ENCODE measurements at regions of chr10 and their contacts with region 1.

Region 1: DNA sequence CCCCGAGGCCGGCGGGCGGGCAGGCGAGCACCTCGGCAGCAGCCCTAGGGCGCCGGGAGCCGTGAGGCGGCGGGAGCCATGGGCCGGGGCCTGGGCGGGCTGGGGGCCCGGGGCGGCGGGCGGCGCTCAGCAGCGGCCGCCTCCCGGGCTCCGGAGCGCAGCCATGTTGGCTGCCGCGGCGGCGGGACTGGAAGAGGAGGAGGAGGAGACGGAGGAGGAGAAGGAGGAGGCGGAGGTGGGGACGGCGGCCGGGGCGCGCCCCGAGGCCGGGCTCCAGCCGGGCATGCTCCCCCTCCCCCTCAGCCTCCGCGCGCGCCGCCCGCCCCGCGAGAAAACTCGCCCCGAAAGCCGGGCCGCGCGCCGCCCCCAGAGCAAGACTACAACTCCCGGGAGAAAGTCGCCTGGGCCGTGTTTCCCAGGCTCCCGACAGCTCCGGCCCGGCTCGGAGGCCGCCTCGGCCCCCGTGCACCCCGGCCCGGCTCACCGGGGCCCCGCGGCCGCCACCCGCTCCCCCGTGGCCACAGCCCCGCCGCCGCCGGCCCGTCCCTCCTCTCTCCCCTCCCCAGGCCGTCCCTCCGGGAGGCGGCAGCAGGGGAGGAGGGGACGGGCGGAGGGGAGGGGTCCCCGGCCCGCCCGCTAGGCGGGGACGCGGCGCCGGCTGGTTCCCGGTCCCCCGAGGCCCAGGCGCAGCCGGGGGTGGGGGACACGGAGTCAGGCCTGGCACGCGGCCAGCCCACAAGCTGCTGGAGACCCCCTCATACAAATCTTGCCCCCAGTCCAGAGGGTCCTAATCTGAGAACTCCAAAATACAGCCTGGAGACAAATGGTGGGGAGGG is at the start of gene DLG5:
- DNase-seq: peak; percentile 80 to 91 (median 86)
- ATAC-seq: peak; percentile 64
- H3K4me3 ChIP-seq: peak within 1 kb of the TSS; percentile 71
- H3K27ac ChIP-seq: peak within 1 kb of the TSS; percentile 75
- H3K4me1 ChIP-seq: peaks cover 34 to 36% of the 10 kb centered on the region in 2 experiments; a peak in 4 of 5 replicates
- H3K27me3 ChIP-seq: no peaks in the 10 kb centered on the region
- CTCF ChIP-seq: no peak
- EP300 ChIP-seq: no peak
- POLR2A ChIP-seq: no peak
- RAD21 ChIP-seq: 0 out of 4 replicates have a peak, but pooled peaks of 1 of the 2 experiments have one; percentile 9
- polyA plus RNA-seq, gene DLG5: 1.4 to 1.5 TPM

Region 2: DNA sequence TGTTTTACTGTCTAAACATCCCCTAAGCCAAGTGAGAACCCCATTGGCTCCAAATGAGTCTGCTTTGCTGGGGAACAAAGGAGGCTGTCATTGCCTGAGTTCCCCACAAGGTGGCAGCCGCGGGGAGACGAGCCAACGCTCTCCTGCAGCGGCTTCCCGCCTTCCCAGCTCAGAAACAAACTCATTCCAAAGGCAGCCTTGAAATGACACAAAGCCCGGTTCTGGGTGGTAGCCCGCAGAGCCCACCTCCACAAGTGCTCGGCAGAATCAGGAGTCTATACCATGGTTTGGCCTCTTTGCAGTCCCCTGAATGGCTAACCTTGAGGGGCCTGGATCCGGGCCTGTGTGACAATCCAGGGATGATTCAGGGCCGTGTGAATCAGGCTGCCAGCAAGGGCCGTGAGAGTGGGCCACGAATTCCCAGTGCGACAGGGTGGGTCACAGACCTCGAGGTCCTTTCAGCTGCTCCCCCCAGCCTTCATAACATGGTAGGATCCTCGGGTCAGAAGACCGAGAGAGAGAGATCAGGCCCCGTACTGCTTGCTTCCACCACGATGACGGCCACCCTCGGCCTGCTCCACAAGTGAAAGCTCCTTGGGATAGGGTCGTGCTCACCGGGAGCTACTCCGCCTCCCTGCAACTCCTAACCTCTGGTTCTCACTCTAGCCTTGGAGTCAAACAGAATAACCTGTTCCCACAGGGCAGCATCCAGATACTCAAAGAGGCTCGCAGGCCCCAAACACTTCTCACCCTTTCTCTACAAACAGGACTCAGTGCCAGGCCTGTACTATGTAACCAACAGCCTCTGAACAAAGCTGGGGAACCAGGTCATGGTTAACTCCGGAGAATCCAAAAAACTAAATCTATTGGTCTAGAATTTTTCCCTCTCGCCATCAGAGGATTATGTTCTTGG is 79.8 kb before region 1 on chr10:
- CTCF ChIA-PET with region 1: no interaction called
- POLR2A ChIA-PET with region 1: interaction called, 3 read pairs
- in situ Hi-C with region 1: no loop called
- intact Hi-C with region 1: loop called (anchors 5 kb)
- DNase-seq: peak; percentile 79 to 88 (median 84)
- ATAC-seq: peak; percentile 90
- H3K4me3 ChIP-seq: no peak overlapping the region
- H3K27ac ChIP-seq: no peak overlapping the region
- H3K4me1 ChIP-seq: peaks cover 13% of the 10 kb centered on the region in 2 experiments
- H3K27me3 ChIP-seq: no peaks in the 10 kb centered on the region
- CTCF ChIP-seq: peak; percentile 87 to 96 (median 93)
- EP300 ChIP-seq: no peak
- POLR2A ChIP-seq: no peak
- RAD21 ChIP-seq: peak; percentile 86 to 91

Region 3: DNA sequence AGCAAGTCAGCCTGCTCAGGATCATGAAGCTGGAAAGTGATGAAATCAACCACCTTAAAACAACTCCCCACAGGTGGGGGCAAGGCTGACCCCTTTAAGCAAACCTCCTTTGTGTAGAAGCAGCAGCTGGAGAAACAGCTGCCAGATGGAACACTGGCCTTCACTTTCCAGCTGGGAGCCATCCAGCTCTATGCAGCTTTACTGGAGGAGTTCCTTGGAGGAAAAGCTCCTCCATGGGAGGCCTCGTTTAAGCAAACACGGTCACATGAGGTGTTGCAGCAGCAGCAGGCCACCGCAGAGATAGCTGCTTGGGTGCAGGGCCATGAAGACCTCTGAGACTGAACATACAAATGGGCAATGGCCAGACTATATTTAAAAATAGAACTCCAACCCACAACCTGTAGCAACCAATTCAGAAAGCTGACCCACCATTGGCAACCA is 12.8 kb after region 1 on chr10:
- CTCF ChIA-PET with region 1: no interaction called
- POLR2A ChIA-PET with region 1: interaction called, 89 read pairs
- in situ Hi-C with region 1: no loop called
- intact Hi-C with region 1: no loop called
- DNase-seq: peak in 1 of 4 experiments; percentile 10
- ATAC-seq: peak; percentile 39
- H3K4me3 ChIP-seq: no peak overlapping the region
- H3K27ac ChIP-seq: no peak overlapping the region
- H3K4me1 ChIP-seq: peaks cover 9 to 23% of the 10 kb centered on the region in 2 experiments; a peak in 4 of 5 replicates
- H3K27me3 ChIP-seq: no peaks in the 10 kb centered on the region
- CTCF ChIP-seq: no peak
- EP300 ChIP-seq: no peak
- POLR2A ChIP-seq: no peak
- RAD21 ChIP-seq: no peak